ENCODE measurements at regions of chr3 and their contacts with region 1.

Region 1: DNA sequence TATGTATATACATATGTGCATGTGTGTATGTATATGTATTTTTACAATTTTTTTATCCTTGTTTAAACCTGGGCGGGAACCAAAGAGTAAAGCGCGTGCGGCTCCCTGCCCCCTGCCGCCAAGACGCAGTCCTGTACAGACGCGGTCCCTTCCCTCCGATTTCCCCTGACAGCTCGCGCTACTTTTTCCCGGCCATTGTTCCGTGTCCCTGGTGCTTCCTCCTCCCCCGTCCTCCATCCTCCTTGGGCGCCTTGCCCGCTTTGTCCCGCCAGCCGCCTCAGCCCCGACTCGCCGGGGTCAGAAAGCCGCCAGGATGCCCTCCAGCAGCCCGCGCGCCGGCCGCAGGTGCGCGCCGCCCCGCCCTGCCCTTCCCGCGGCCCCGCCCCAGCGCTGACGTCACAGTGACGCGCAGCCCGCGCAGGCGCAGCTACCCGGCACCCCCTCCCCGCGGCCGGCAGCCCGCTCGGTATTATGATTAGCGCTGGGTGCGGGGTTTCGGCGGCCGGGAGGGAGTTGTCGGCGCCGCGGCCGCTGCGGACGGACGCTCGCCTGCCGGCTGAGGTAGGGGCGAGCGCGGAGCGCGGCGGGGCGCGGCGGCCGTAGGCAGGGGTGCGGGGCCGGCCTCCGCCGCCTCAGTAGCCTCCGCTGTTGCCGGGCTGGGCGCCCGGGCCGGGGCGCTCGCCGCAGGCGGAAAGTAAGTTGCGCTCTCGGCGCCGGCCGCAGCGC is at the start of gene SNRK:
- DNase-seq: peak; percentile 91
- H3K4me3 Mint-ChIP-seq: peak within 1 kb of the TSS; percentile 91
- H3K27ac Mint-ChIP-seq: peak within 1 kb of the TSS; percentile 93
- H3K4me1 Mint-ChIP-seq: peaks cover 33% of the 10 kb centered on the region
- H3K27me3 Mint-ChIP-seq: no peaks in the 10 kb centered on the region
- total RNA-seq, gene SNRK: 21.1 TPM

Region 2: GRCh38 chr3:43223670-43224364 is 62.5 kb before region 1 on chr3:
- CTCF ChIA-PET with region 1: no interaction called
- intact Hi-C with region 1: loop called (anchors 2 kb)
- DNase-seq: no peak
- H3K4me3 Mint-ChIP-seq: no peak overlapping the region
- H3K27ac Mint-ChIP-seq: no peak overlapping the region
- H3K4me1 Mint-ChIP-seq: peaks cover 49% of the 10 kb centered on the region
- H3K27me3 Mint-ChIP-seq: no peaks in the 10 kb centered on the region

Region 3: GRCh38 chr3:43236008-43236407 is 50.3 kb before region 1 on chr3:
- CTCF ChIA-PET with region 1: no interaction called
- intact Hi-C with region 1: loop called (anchors 5 kb)
- DNase-seq: no peak
- H3K4me3 Mint-ChIP-seq: no peak overlapping the region
- H3K27ac Mint-ChIP-seq: no peak overlapping the region
- H3K4me1 Mint-ChIP-seq: peaks cover 24% of the 10 kb centered on the region
- H3K27me3 Mint-ChIP-seq: no peaks in the 10 kb centered on the region

Region 4: DNA sequence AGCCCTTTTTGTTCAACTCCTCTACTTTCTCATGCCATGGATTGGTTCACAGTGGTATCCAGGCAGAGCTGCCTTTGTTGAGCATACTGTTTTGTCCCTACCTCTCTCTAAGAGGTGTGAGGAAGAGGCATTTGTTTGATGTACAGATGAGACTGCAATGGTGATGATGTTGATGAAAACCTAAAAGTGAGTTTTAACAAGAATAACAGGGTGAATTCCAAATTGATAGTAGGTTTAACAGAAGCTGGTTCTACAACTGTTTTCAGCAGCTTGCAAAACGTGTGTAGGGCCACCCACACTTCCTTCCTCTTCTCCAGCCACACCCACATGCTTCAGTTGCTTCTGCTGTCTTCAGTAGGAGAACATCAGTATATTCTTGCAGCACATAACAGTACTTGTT is 10.3 kb after region 1 on chr3:
- CTCF ChIA-PET with region 1: interaction called, 6 read pairs
- intact Hi-C with region 1: loop called (anchors 1 kb)
- DNase-seq: peak; percentile 74
- H3K4me3 Mint-ChIP-seq: peak overlapping the region; percentile 72
- H3K27ac Mint-ChIP-seq: peak overlapping the region; percentile 93
- H3K4me1 Mint-ChIP-seq: peaks cover 75% of the 10 kb centered on the region
- H3K27me3 Mint-ChIP-seq: no peaks in the 10 kb centered on the region

Region 5: DNA sequence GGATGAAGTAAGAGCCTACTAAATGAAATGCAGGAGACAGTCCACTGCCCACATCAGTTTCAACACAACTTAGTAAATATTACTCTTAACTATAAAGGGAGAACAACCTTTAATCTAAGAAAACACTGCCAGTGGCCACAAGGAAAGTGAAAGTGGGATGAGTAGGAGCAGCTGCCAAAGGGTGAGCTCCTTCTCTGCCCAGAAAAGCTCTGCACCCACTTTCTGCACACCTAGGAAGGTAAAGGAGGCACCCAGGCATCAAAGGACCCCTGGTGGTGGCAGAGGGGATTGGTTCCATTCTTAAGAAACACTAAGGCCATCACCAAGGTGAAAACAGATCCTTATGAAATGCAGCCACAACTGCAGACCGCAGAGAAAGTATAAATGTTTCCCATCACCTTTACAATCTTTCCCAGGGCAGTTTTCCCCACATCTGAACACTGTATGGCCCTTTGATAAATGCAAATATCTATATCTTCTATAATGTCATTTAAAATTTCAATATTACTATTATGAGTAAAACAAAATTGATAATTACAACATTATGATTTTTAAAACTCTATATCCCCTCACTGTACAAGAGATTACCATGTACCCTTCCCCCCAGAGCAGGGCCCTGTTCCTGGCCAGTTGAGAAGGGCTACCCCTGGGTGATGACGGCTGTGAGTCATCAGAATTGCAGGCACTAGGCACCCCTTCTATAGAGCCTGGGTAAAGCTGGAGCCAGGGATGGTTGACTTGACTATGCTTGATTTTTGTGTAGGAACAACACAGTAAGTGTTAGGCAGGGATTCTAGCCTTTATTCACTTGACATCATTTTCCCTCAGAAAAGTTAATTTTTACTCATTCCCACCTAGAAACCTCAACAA is 92.0 kb after region 1 on chr3:
- CTCF ChIA-PET with region 1: interaction called, 5 read pairs
- intact Hi-C with region 1: loop called (anchors 1 kb)
- DNase-seq: peak; percentile 84
- H3K4me3 Mint-ChIP-seq: no peak overlapping the region
- H3K27ac Mint-ChIP-seq: no peak overlapping the region
- H3K4me1 Mint-ChIP-seq: peaks cover 12% of the 10 kb centered on the region
- H3K27me3 Mint-ChIP-seq: no peaks in the 10 kb centered on the region

Region 6: DNA sequence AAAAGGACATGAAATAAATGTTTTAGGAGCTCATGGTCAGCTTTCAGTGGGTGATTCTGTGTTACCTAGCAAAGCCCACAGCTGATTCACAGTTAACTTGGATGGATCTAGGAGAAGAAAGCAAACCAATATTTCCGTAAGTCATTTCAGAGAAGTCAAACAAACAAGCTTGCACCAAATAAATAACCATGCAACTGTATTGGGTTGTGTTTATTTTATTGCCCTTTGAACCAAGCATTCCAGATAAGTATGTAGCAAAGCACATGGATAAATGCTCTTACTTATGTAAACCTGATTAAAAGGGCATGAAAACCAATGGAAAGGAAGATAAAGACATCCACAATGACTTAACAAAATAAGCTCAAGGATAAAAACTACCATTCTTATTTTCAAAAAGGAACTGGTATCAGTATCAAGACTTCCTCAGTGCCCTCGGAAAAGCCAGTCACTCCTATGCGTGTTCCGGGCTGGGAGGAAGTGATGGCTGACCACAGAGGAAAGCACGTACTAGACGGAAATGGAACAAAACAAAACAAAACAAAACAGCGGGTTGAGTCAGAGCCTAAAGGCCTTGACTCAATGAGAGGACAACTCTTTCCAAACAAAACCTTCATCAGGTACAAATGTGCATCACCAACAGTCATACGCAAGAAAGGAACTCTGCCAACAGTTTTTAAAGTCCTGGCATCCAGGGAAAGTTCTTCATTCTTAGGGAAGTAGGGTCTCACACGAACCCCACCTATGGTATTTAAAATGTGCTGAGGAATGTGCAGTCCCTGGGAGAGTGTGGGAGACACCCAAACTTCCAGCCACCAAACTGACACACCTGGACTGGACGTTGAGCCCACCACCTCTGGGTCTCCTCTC is 103.3 kb after region 1 on chr3:
- CTCF ChIA-PET with region 1: no interaction called
- intact Hi-C with region 1: loop called (anchors 1 kb)
- DNase-seq: peak; percentile 87
- H3K4me3 Mint-ChIP-seq: peak overlapping the region; percentile 9
- H3K27ac Mint-ChIP-seq: peak overlapping the region; percentile 55
- H3K4me1 Mint-ChIP-seq: peaks cover 63% of the 10 kb centered on the region
- H3K27me3 Mint-ChIP-seq: no peaks in the 10 kb centered on the region

Region 7: DNA sequence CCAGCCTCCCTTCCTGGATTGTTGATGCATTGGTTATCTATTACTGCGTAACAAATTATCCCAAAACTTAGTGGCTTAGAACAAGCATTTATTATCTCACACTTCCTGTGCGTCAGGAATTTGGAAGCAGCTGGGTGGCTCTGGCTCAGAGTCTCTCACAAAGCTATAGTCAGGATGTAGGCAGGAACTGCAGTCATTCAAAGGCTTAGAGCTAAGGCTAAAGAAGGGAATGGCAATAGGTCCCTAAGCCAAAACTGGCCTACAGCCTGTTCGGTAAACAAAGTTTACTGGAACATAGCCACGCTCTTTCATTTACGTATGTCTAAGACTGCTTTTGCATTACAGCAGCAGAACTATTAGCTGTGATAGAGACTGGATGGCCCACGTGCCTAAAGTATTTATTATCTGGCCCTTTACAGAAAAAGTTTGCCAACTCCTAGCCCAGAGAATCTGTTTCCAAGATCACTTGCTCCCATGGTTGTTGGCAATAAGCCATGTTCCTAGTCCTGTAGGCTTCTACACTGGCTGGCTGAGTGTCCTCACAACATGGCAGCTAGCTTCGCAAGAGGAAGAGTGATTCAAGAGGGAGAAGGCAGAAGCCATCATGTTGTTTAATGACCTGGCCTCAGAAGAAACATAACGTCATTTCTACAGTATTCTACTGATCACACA is 132.5 kb after region 1 on chr3:
- CTCF ChIA-PET with region 1: no interaction called
- intact Hi-C with region 1: no loop called
- DNase-seq: no peak
- H3K4me3 Mint-ChIP-seq: no peak overlapping the region
- H3K27ac Mint-ChIP-seq: no peak overlapping the region
- H3K4me1 Mint-ChIP-seq: peaks cover 4% of the 10 kb centered on the region
- H3K27me3 Mint-ChIP-seq: no peaks in the 10 kb centered on the region

Region 8: DNA sequence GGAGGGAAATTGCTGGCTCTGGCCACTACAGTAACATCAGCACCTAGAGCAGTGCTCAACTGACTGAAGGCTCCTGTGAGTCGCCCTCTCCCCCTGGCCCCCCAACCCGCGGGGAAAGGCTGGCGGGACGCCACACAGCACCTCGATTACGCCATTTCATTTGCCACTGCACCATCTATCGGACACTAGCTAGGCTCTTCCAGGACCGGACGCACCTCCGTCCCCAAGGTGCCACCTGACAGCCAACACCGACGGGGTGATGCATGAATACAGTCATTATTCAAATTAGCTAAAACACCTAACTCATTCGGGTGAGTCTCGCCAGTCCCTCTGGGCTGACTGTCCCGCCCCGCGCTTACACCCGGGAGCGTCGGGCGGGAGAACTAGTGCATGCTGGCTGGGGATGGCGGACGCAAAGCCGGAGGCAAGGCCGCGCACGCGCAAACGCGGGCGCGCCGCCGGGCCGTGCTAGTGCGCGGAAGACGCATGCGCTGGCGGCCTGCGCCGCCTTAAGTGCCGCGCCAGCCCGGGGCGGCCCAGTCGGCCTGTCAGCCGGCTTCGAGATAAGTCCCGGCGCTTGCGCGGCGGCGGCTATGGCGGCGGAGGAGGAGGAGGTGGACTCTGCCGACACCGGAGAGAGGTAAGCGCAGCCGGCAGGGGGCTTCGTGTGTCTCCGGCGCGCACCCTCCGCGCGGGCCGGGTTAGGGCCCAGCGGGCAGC is 404.3 kb after region 1 on chr3 and contains the start of gene ABHD5:
- CTCF ChIA-PET with region 1: no interaction called
- intact Hi-C with region 1: loop called (anchors 5 kb)
- DNase-seq: peak; percentile 85
- H3K4me3 Mint-ChIP-seq: peak within 1 kb of the TSS; percentile 83
- H3K27ac Mint-ChIP-seq: peak within 1 kb of the TSS; percentile 85
- H3K4me1 Mint-ChIP-seq: peaks cover 31% of the 10 kb centered on the region
- H3K27me3 Mint-ChIP-seq: no peaks in the 10 kb centered on the region
- total RNA-seq, gene ABHD5: 9.4 to 11.0 TPM

Region 9: DNA sequence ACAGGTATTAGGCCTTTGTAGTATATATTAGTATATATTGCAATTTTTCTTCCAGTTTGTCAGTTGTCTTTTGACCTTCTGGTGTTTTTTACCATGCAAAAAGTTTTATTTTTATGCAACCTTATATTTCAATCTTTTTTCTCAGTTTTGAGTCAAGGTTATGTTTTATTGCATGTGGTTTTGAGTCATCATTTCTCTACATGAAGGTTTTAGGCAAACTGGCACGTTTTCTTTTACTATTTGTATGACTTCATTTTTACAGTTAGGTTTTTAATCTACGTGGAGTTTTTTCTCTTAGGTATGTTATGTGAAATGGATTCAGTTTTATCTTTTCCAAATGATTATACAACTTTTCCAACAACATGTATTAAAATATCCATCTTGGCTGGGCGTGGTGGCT is 1015.5 kb after region 1 on chr3:
- CTCF ChIA-PET with region 1: no interaction called
- intact Hi-C with region 1: no loop called
- DNase-seq: no peak
- H3K4me3 Mint-ChIP-seq: no peak overlapping the region
- H3K27ac Mint-ChIP-seq: no peak overlapping the region
- H3K4me1 Mint-ChIP-seq: no peaks in the 10 kb centered on the region
- H3K27me3 Mint-ChIP-seq: peaks cover 4% of the 10 kb centered on the region

Measured in activated naive CD4-positive, alpha-beta T cell treated with anti-CD3 and anti-CD28 coated beads for 36 hours (primary cell).